ENCODE measurements at regions of chrX and their contacts with region 1.

Region 1: GRCh38 chrX:53669258-53669657 is 17.3 kb downstream of the HUWE1 start:
- DNase-seq: no peak
- H3K4me3 ChIP-seq: no peak overlapping the region
- H3K27ac ChIP-seq: no peak overlapping the region
- H3K4me1 ChIP-seq: no peaks in the 10 kb centered on the region
- H3K27me3 ChIP-seq: no peaks in the 10 kb centered on the region
- CTCF ChIP-seq: no peak

Region 2: GRCh38 chrX:53738370-53738906 is 69.2 kb after region 1 on chrX:
- CTCF ChIA-PET with region 1: no interaction called
- POLR2A ChIA-PET with region 1: no interaction called
- intact Hi-C with region 1: no loop called
- DNase-seq: no peak
- H3K4me3 ChIP-seq: no peak overlapping the region
- H3K27ac ChIP-seq: no peak overlapping the region
- H3K4me1 ChIP-seq: no peaks in the 10 kb centered on the region
- H3K27me3 ChIP-seq: no peaks in the 10 kb centered on the region
- CTCF ChIP-seq: no peak

Region 3: GRCh38 chrX:53939127-53939526 is 269.9 kb after region 1 on chrX:
- CTCF ChIA-PET with region 1: no interaction called
- POLR2A ChIA-PET with region 1: no interaction called
- intact Hi-C with region 1: loop called (anchors 10 kb)
- DNase-seq: no peak
- H3K4me3 ChIP-seq: no peak overlapping the region
- H3K27ac ChIP-seq: no peak overlapping the region
- H3K4me1 ChIP-seq: no peaks in the 10 kb centered on the region
- H3K27me3 ChIP-seq: no peaks in the 10 kb centered on the region
- CTCF ChIP-seq: no peak

Region 4: GRCh38 chrX:54012830-54013500 is 343.7 kb after region 1 on chrX:
- CTCF ChIA-PET with region 1: no interaction called
- POLR2A ChIA-PET with region 1: no interaction called
- intact Hi-C with region 1: no loop called
- DNase-seq: no peak
- H3K4me3 ChIP-seq: no peak overlapping the region
- H3K27ac ChIP-seq: no peak overlapping the region
- H3K4me1 ChIP-seq: no peaks in the 10 kb centered on the region
- H3K27me3 ChIP-seq: no peaks in the 10 kb centered on the region
- CTCF ChIP-seq: no peak

Measured in PC-9 (cell line).